ENCODE measurements at regions of chr9 and their contacts with region 1.

Region 1: DNA sequence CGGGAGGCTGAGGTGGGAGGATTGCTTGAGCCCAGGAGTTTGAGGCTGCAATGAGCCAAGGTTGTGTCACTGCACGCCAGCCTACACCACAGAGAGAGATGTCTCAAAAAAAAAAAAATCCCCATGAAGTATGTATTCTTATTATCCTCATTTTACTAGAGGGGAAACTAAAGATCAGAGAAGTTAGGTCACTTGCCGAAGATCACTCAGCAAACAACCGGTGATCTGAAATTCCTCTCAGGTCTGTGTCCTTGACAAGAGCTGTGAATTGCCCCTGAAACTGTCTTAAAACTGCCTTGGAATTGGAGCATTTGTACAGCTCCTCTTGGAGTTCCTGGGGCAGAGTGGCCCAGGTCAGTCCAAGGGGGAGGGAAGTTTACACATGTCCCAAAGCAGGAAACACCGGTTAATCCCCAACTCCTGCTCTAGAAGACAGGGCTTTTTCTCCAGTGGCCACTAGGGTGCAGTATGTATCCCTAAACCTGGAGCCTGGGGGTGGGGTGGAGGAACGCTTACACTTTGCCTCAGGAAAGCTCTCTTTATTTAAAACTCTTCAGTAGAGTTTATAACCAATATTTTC is 27.6 kb downstream of the AQP7 start:
- DNase-seq: no peak
- ATAC-seq: peak; percentile 89
- H3K4me3 Mint-ChIP-seq: peak overlapping the region; percentile 11
- H3K27ac Mint-ChIP-seq: no peak overlapping the region
- H3K4me1 Mint-ChIP-seq: peaks cover 6% of the 10 kb centered on the region
- H3K27me3 Mint-ChIP-seq: no peaks in the 10 kb centered on the region
- CTCF ChIP-seq: no peak

Region 2: GRCh38 chr9:33320568-33321261 is 54.0 kb before region 1 on chr9:
- CTCF ChIA-PET with region 1: no interaction called
- POLR2A ChIA-PET with region 1: no interaction called
- intact Hi-C with region 1: no loop called
- DNase-seq: no peak
- ATAC-seq: no peak
- H3K4me3 Mint-ChIP-seq: no peak overlapping the region
- H3K27ac Mint-ChIP-seq: no peak overlapping the region
- H3K4me1 Mint-ChIP-seq: no peaks in the 10 kb centered on the region
- H3K27me3 Mint-ChIP-seq: no peaks in the 10 kb centered on the region
- CTCF ChIP-seq: no peak

Region 3: GRCh38 chr9:33446946-33447798 is 72.4 kb after region 1 on chr9 and contains the start of gene AQP3:
- CTCF ChIA-PET with region 1: no interaction called
- POLR2A ChIA-PET with region 1: no interaction called
- intact Hi-C with region 1: loop called (anchors 5 kb)
- DNase-seq: peak; percentile 37
- ATAC-seq: peak; percentile 77
- H3K4me3 Mint-ChIP-seq: peak within 1 kb of the TSS; percentile 83
- H3K27ac Mint-ChIP-seq: peak within 1 kb of the TSS; percentile 70
- H3K4me1 Mint-ChIP-seq: peaks cover 20% of the 10 kb centered on the region
- H3K27me3 Mint-ChIP-seq: peaks cover 7% of the 10 kb centered on the region
- CTCF ChIP-seq: no peak
- total RNA-seq, gene AQP3: 0.95 and 1.6 TPM in 2 replicates

Region 4: DNA sequence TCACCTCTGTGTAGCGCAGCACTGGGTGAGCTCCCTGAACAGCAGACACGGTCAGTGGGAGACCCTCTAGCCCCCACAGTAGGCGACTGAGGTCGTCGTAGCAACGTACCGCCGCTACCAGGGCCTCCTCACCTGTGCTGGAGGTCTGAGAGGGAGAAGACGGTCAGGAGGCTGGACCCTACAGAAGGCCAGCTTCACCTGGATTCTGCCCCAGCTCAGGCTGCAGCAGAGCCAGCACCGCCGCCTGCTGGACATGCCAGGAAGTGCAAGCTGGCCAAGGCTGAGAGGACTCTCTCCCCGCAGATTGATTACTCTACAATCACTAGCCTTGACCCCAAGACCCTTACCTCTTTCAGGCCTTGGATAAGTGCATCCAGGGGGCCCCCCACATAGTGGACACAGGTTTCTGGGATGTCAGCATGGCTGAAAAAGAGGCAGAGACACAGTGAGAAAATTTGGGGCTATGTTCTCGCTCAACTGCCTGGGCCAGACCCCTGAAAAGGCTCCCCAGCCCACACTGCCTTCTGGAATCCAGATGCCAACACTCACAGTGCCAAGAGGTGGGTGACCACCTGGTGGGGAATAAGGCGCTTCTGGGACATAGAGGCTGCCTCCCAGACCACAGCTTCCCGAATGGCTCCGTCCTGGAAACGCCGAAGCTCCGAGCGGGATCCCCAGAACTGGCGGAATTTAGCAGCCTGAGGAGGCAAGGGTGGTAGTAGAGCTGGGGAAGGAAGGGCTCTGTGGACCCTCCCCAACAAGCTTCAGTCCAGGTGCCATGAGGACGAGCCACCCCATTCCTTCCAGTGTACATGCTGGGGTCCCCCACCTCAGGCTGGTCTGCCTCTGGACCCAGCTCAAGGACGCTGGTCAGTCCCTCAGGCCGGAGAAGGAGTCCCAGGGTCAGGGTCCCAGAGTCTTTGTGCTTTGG is 92.1 kb after region 1 on chr9:
- CTCF ChIA-PET with region 1: interaction called, 14 read pairs
- POLR2A ChIA-PET with region 1: no interaction called
- intact Hi-C with region 1: loop called (anchors 1 kb)
- DNase-seq: peak; percentile 61
- ATAC-seq: peak; percentile 83
- H3K4me3 Mint-ChIP-seq: no peak overlapping the region
- H3K27ac Mint-ChIP-seq: no peak overlapping the region
- H3K4me1 Mint-ChIP-seq: peaks cover 6% of the 10 kb centered on the region
- H3K27me3 Mint-ChIP-seq: no peaks in the 10 kb centered on the region
- CTCF ChIP-seq: peak; percentile 48